IMR-90 (cell line): ENCODE measurements at regions of chr12 and their contacts with region 1.

Region 1: GRCh38 chr12:17642340-17642650 is 447.7 kb downstream of the RERGL start:
- DNase-seq: no peak
- ATAC-seq: no peak
- H3K4me3 ChIP-seq: no peak overlapping the region
- H3K27ac ChIP-seq: no peak overlapping the region
- H3K4me1 ChIP-seq: no peaks in the 10 kb centered on the region
- H3K27me3 ChIP-seq: no peaks in the 10 kb centered on the region
- CTCF ChIP-seq: no peak
- POLR2A ChIP-seq: no peak
- RAD21 ChIP-seq: no peak

Region 2: DNA sequence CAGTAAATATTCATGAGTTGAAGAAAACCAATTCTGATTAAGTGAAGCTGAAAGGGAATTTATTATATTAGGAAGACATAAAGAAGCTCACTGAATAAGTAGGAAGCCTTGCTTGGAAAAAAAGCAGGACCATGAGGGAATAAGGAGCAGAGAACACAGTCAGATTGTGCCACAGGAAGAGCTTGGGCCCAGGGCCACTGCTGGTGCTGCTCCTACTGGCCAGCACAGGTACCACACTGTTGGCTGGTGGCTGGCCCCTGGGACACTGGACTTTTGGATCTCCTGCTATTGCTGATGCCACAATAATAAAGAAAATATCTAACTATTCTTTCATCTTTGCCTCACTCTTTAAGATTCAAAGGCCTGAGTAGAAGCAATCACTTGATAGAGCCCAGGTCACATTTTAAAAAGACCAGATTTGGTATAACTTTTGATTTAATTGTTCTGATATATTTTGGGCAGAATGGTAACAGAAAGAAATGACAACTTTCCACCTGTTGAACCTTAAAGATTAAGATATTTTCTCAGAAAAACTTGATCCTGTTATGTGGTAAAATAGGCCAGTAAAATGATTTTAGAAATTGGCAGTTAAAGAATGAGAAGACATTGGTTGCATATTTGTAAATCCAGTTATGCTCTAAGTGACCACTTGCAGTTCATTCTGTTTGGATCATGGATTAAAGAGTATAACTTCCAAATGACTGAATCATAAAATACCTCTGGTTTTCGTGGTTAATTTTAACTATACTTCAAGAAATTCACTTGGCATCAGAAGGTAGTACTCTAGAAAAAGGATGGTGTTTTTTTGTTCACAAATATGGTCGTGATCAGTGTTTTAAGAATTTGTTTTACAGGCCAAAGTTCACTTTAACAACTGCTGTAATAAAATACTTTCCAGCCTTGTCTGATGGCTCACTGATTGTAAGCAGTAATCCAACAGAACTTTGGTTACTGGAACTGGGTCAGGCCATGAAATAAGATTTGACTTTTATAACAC is 1662.9 kb before region 1 on chr12:
- CTCF ChIA-PET with region 1: no interaction called
- POLR2A ChIA-PET with region 1: no interaction called
- dilution Hi-C with region 1: no loop called
- in situ Hi-C with region 1: no loop called
- intact Hi-C with region 1: loop called (anchors 2 kb)
- DNase-seq: peak; percentile 93
- ATAC-seq: peak; percentile 74
- H3K4me3 ChIP-seq: no peak overlapping the region
- H3K27ac ChIP-seq: peak overlapping the region; percentile 81
- H3K4me1 ChIP-seq: peaks cover 22% of the 10 kb centered on the region
- H3K27me3 ChIP-seq: no peaks in the 10 kb centered on the region
- CTCF ChIP-seq: peak; percentile 37
- POLR2A ChIP-seq: no peak
- RAD21 ChIP-seq: no peak

Region 3: GRCh38 chr12:16165506-16165905 is 1476.8 kb before region 1 on chr12:
- CTCF ChIA-PET with region 1: no interaction called
- POLR2A ChIA-PET with region 1: no interaction called
- dilution Hi-C with region 1: no loop called
- in situ Hi-C with region 1: loop called (anchors 25 kb)
- intact Hi-C with region 1: loop called (anchors 1 kb)
- DNase-seq: peak; percentile 47
- ATAC-seq: peak; percentile 80
- H3K4me3 ChIP-seq: no peak overlapping the region
- H3K27ac ChIP-seq: no peak overlapping the region
- H3K4me1 ChIP-seq: no peaks in the 10 kb centered on the region
- H3K27me3 ChIP-seq: no peaks in the 10 kb centered on the region; the same call in 1 of the 2 replicates
- CTCF ChIP-seq: peak; percentile 68
- POLR2A ChIP-seq: no peak
- RAD21 ChIP-seq: peak; percentile 78

Region 4: DNA sequence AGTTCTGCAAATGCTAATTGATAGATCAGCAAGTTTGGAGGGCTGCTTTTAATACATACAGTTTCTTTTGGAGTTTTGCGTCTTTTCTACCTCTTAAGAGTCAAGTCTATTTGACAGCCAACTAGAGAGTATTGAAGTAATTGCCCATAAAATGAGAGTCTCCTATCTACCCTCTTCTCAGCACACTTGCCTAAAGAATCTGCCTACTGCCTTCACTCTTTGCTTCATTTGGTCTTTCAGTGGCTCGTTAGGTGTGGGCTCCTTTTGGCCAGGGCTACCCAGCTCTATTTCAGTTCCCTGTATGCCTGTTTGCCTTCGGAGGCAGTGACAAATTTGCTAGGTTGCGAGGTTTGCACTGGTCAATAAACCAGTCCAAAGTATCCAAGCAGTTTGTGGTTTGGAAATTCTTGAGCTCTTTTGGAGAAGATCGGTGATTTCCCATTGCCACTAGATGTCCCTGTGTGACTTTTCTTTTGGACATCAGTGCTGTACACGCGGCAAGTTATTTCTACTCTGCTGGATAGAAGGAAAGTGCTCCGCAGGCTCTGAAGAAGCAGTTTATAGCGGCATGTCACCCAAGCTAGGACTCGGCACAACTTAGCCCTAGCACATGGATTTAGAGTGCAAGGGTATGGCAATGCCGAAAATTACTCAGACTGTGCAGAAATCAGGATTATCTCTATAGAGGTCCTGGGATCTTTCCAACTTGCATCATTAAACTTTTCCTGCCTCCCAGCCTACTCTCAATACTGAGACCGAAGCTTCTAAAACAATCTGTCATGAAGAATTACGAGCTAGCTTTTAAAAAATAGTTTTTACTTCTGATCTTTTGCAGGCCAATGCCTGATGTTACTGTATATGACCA is 1256.3 kb before region 1 on chr12:
- CTCF ChIA-PET with region 1: interaction called, 4 read pairs
- POLR2A ChIA-PET with region 1: no interaction called
- dilution Hi-C with region 1: no loop called
- in situ Hi-C with region 1: loop called (anchors 10 kb)
- intact Hi-C with region 1: loop called (anchors 2 kb)
- DNase-seq: peak; percentile 70
- ATAC-seq: peak; percentile 93
- H3K4me3 ChIP-seq: no peak overlapping the region
- H3K27ac ChIP-seq: no peak overlapping the region
- H3K4me1 ChIP-seq: peaks cover 2% of the 10 kb centered on the region; the same call in 1 of the 2 replicates
- H3K27me3 ChIP-seq: no peaks in the 10 kb centered on the region
- CTCF ChIP-seq: peak; percentile 67
- POLR2A ChIP-seq: no peak
- RAD21 ChIP-seq: peak; percentile 74

Region 5: GRCh38 chr12:18224745-18225144 is 582.5 kb after region 1 on chr12:
- CTCF ChIA-PET with region 1: no interaction called
- POLR2A ChIA-PET with region 1: no interaction called
- dilution Hi-C with region 1: no loop called
- in situ Hi-C with region 1: no loop called
- intact Hi-C with region 1: loop called (anchors 5 kb)
- DNase-seq: peak; percentile 5
- ATAC-seq: peak; percentile 64; the same call in 1 of the 2 replicates
- H3K4me3 ChIP-seq: no peak overlapping the region
- H3K27ac ChIP-seq: no peak overlapping the region
- H3K4me1 ChIP-seq: no peaks in the 10 kb centered on the region
- H3K27me3 ChIP-seq: no peaks in the 10 kb centered on the region
- CTCF ChIP-seq: peak; percentile 28; the same call in 1 of the 2 replicates
- POLR2A ChIP-seq: no peak
- RAD21 ChIP-seq: peak; percentile 34; the same call in 1 of the 2 replicates

Region 6: DNA sequence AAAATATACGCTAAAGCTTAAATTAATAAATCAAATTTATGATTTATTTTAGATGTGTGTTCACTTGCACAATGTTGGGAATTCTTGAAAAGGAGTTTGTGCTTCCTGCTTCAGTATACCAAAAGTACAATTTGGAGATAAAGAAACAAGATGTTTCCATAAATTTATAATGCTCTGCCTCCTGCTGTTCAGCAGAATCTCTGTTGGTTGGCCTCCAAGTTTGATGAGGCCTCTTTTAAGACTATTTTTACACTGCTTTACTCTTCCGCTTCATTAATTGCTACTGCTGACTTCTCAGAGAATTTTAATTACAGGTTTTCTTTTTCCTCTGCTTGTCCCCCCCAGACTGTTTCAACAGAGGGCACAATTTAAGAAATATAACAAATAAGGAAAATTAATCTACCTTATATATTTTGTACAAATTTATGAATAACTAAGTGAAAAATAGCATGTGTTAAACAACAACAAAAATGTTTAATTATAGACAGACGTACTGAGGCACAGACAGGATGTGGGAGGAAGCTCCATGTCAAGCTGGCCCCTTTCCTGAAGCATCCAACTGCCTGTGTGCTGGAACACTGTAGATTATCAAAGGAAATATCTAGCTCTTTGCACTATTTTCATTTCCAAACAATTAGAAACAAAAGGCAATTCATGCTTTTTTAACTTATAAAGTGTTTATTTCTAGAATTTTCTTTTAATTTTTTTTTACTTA is 702.9 kb after region 1 on chr12:
- CTCF ChIA-PET with region 1: no interaction called
- POLR2A ChIA-PET with region 1: no interaction called
- dilution Hi-C with region 1: no loop called
- in situ Hi-C with region 1: no loop called
- intact Hi-C with region 1: no loop called
- DNase-seq: no peak
- ATAC-seq: no peak
- H3K4me3 ChIP-seq: no peak overlapping the region
- H3K27ac ChIP-seq: no peak overlapping the region
- H3K4me1 ChIP-seq: no peaks in the 10 kb centered on the region; the same call in 1 of the 2 replicates
- H3K27me3 ChIP-seq: no peaks in the 10 kb centered on the region
- CTCF ChIP-seq: no peak
- POLR2A ChIP-seq: no peak
- RAD21 ChIP-seq: no peak